BJ (cell line): ENCODE measurements at regions of chr6 and their contacts with region 1.

Region 1: DNA sequence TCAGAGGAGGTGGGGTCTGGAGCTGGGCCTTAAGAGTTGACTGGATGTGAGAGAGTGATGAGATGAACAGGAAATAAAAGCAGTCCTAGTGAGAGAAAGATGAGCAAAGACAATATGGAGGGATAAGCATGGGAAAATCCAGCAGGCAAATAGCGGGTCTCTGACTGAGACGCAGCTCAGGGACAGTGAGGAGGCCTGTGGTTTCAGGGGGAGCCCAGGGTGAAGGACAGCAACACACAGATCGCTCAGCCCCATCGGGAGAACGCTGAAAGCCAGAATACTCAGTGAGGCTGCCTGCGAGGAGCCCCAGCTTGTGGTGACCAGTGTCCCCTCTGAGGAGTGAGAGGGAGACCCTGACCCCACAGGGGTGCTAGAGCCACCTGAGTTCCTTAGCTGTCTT is 16.8 kb upstream of the DCDC2 start:
- DNase-seq: no peak
- H3K4me3 ChIP-seq: no peak overlapping the region
- H3K27me3 ChIP-seq: no peaks in the 10 kb centered on the region
- CTCF ChIP-seq: no peak

Region 2: GRCh38 chr6:24359640-24360454 is 14.8 kb before region 1 on chr6:
- CTCF ChIA-PET with region 1: interaction called, 12 read pairs
- POLR2A ChIA-PET with region 1: no interaction called
- DNase-seq: peak; percentile 8
- H3K4me3 ChIP-seq: peak overlapping the region; percentile 47
- H3K27me3 ChIP-seq: peaks cover 13% of the 10 kb centered on the region
- CTCF ChIP-seq: peak; percentile 86